ENCODE measurements at regions of chr4 and their contacts with region 1.

Region 1: DNA sequence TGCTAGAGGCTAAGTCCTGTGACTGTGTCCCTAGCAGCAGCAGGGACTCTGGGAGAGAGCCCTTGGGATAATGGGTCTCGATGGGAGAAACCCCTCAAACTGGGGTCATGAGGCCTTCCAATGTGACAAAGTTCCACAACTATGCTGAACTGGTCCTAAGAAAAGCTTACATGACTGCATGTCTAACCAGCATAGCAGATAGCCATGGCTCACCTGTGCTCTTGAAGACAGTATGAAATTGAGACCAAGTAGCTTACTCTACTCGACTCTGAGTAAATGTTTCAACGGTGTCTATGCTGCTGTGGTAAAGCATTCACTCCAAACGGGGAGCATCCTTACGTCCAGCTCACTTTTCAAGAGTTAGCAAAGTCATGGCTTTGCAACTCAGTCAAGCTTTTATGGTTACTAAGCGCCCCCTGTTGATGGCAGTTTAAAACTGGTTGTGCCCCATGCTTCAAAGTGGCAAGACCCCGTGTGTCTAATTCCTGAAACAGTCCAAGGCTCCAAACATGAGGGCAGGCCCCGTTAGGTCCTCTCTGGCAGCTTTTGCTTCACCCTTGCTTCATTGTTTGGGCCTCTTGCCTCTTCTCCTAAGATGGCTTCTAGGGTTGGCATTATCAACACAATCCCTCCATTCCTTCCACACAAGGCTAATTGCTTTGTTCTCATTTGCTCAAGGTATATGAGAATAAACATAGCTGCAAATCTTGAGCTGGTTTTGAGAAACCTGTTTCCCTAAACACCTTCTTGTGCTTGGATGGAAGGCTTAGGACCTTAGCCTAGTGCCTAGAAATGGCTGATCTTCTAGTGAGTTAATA is 46.6 kb downstream of the CCNG2 start:
- DNase-seq: peak; percentile 23 to 73 (median 61)
- ATAC-seq: peak; percentile 87
- H3K4me3 ChIP-seq: no peak overlapping the region
- H3K4me3 Mint-ChIP-seq: no peak overlapping the region
- H3K27ac ChIP-seq: no peak overlapping the region
- H3K27ac Mint-ChIP-seq: no peak overlapping the region
- H3K4me1 ChIP-seq: no peaks in the 10 kb centered on the region
- H3K4me1 Mint-ChIP-seq: peaks cover 0 to 7% (median 0%) of the 10 kb centered on the region in 7 donors
- H3K27me3 ChIP-seq: no peaks in the 10 kb centered on the region
- H3K27me3 Mint-ChIP-seq: peaks cover 0 to 25% (median 5%) of the 10 kb centered on the region in 5 donors

Region 2: GRCh38 chr4:76179398-76180318 is 1023.9 kb before region 1 on chr4:
- CTCF ChIA-PET with region 1: interaction called, 8 read pairs
- POLR2A ChIA-PET with region 1: no interaction called
- intact Hi-C with region 1: loop called in 1 of 2 experiments (anchors 5 kb)
- DNase-seq: peak; percentile 63 to 82 (median 72)
- ATAC-seq: peak; percentile 95
- H3K4me3 ChIP-seq: no peak overlapping the region
- H3K4me3 Mint-ChIP-seq: no peak overlapping the region
- H3K27ac ChIP-seq: no peak overlapping the region
- H3K27ac Mint-ChIP-seq: peak overlapping the region in 2 of 9 donors; percentile 27 to 53
- H3K4me1 ChIP-seq: no peaks in the 10 kb centered on the region
- H3K4me1 Mint-ChIP-seq: peaks cover 0 to 3% (median 0%) of the 10 kb centered on the region in 7 donors
- H3K27me3 ChIP-seq: no peaks in the 10 kb centered on the region
- H3K27me3 Mint-ChIP-seq: no peaks in the 10 kb centered on the region

Region 3: DNA sequence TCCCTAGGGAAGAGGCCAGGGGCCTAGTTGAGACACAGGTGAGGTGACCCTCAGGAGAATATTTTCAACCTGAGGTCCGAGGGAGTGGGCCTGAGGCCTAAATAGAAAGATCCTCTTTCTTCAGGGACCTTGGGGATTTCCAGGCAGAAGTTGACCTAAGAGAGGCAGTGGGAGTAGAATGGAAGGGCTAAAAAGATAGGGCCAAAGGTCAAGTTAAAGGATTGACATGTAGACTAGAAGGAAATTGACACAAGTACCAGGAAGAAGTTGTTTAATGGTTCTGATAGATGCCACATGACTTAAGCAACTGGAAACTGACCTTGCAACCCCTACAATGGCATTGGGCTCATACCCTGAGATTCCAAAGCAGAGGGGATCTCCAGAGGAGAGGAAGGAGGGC is 691.6 kb before region 1 on chr4:
- CTCF ChIA-PET with region 1: no interaction called
- POLR2A ChIA-PET with region 1: no interaction called
- intact Hi-C with region 1: loop called in 1 of 2 experiments (anchors 1 kb)
- DNase-seq: no peak
- ATAC-seq: no peak
- H3K4me3 ChIP-seq: no peak overlapping the region
- H3K4me3 Mint-ChIP-seq: no peak overlapping the region
- H3K27ac ChIP-seq: no peak overlapping the region
- H3K27ac Mint-ChIP-seq: no peak overlapping the region
- H3K4me1 ChIP-seq: no peaks in the 10 kb centered on the region
- H3K4me1 Mint-ChIP-seq: no peaks in the 10 kb centered on the region
- H3K27me3 ChIP-seq: no peaks in the 10 kb centered on the region
- H3K27me3 Mint-ChIP-seq: peaks cover 0 to 6% (median 4%) of the 10 kb centered on the region in 5 donors

Region 4: DNA sequence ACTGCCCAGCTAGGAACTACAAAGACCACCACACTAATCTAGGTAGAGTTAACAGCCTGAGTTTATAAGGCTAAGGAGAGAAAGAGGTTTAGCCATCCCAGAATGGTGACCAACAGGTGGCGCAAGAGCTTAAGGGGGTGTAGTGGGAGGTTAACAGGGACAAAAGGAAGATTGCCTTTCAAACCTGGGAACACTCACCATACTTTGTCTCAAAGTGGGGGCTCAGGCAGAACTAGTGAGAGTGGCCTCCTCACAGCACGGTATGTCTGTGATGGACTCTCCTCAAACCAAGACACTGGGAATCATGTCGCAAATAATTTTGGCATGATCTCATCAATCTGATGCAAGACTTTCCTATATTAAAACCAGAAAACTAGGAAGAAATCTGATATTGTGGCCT is 151.2 kb before region 1 on chr4:
- CTCF ChIA-PET with region 1: interaction called, 21 read pairs
- POLR2A ChIA-PET with region 1: interaction called, 5 read pairs
- intact Hi-C with region 1: loop called (anchors 1 kb)
- DNase-seq: peak in 7 of 9 donors; percentile 18 to 59 (median 42)
- ATAC-seq: peak; percentile 74
- H3K4me3 ChIP-seq: no peak overlapping the region
- H3K4me3 Mint-ChIP-seq: no peak overlapping the region
- H3K27ac ChIP-seq: no peak overlapping the region
- H3K27ac Mint-ChIP-seq: peak overlapping the region in 6 of 9 donors; percentile 14 to 83 (median 70)
- H3K4me1 ChIP-seq: no peaks in the 10 kb centered on the region
- H3K4me1 Mint-ChIP-seq: peaks cover 0 to 19% (median 9%) of the 10 kb centered on the region in 7 donors
- H3K27me3 ChIP-seq: no peaks in the 10 kb centered on the region
- H3K27me3 Mint-ChIP-seq: no peaks in the 10 kb centered on the region

Region 5: GRCh38 chr4:77095101-77095821 is 108.3 kb before region 1 on chr4:
- CTCF ChIA-PET with region 1: interaction called, 147 read pairs
- POLR2A ChIA-PET with region 1: interaction called, 12 read pairs
- intact Hi-C with region 1: loop called (anchors 1 kb)
- DNase-seq: peak; percentile 46 to 67 (median 59)
- ATAC-seq: peak; percentile 98
- H3K4me3 ChIP-seq: no peak overlapping the region
- H3K4me3 Mint-ChIP-seq: no peak overlapping the region
- H3K27ac ChIP-seq: no peak overlapping the region
- H3K27ac Mint-ChIP-seq: no peak overlapping the region
- H3K4me1 ChIP-seq: peaks cover 0 to 2% of the 10 kb centered on the region in 2 donors
- H3K4me1 Mint-ChIP-seq: peaks cover 8 to 20% (median 16%) of the 10 kb centered on the region in 7 donors
- H3K27me3 ChIP-seq: no peaks in the 10 kb centered on the region
- H3K27me3 Mint-ChIP-seq: no peaks in the 10 kb centered on the region

Region 6: GRCh38 chr4:77742054-77742453 is 538.5 kb after region 1 on chr4:
- CTCF ChIA-PET with region 1: no interaction called
- POLR2A ChIA-PET with region 1: no interaction called
- intact Hi-C with region 1: no loop called
- DNase-seq: no peak
- ATAC-seq: no peak
- H3K4me3 ChIP-seq: no peak overlapping the region
- H3K4me3 Mint-ChIP-seq: no peak overlapping the region
- H3K27ac ChIP-seq: no peak overlapping the region
- H3K27ac Mint-ChIP-seq: peak overlapping the region in 1 of 9 donors; percentile 59
- H3K4me1 ChIP-seq: peaks cover 0 to 1% of the 10 kb centered on the region in 2 donors
- H3K4me1 Mint-ChIP-seq: peaks cover 22 to 67% (median 52%) of the 10 kb centered on the region in 7 donors
- H3K27me3 ChIP-seq: no peaks in the 10 kb centered on the region
- H3K27me3 Mint-ChIP-seq: no peaks in the 10 kb centered on the region

Measured in naive thymus-derived CD4-positive, alpha-beta T cell (primary cell).